CD4-positive, alpha-beta T cell (primary cell): ENCODE measurements at regions of chr3 and their contacts with region 1.

Region 1: DNA sequence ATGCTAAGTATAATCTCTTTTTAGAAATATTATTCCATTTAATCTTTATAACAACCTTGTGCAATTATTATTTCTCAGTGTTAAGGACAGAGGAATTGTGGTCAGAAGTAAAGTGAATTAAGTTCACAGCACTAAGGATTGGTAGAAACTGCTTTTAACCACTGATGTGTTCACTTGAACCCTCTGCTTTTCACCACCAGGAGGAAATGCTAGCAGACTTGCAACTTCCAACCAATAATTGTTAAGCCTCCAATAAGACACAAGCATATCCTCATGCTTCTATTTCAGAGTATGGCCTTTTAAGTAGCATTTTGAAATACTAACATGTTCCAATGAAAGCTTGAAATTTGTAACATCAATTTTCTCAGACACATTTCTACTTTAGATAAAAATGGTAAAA is 527.4 kb downstream of the SI start:
- DNase-seq: no peak
- ATAC-seq: no peak
- H3K4me3 ChIP-seq: no peak overlapping the region
- H3K4me3 Mint-ChIP-seq: no peak overlapping the region
- H3K27ac ChIP-seq: no peak overlapping the region
- H3K27ac Mint-ChIP-seq: no peak overlapping the region
- H3K4me1 ChIP-seq: no peaks in the 10 kb centered on the region
- H3K4me1 Mint-ChIP-seq: no peaks in the 10 kb centered on the region
- H3K27me3 ChIP-seq: no peaks in the 10 kb centered on the region
- H3K27me3 Mint-ChIP-seq: no peaks in the 10 kb centered on the region
- CTCF ChIP-seq: no peak

Region 2: GRCh38 chr3:164507886-164508285 is 43.0 kb before region 1 on chr3:
- CTCF ChIA-PET with region 1: no interaction called
- POLR2A ChIA-PET with region 1: no interaction called
- intact Hi-C with region 1: no loop called
- DNase-seq: no peak
- ATAC-seq: no peak
- H3K4me3 ChIP-seq: no peak overlapping the region
- H3K4me3 Mint-ChIP-seq: no peak overlapping the region
- H3K27ac ChIP-seq: no peak overlapping the region
- H3K27ac Mint-ChIP-seq: no peak overlapping the region
- H3K4me1 ChIP-seq: no peaks in the 10 kb centered on the region
- H3K4me1 Mint-ChIP-seq: no peaks in the 10 kb centered on the region
- H3K27me3 ChIP-seq: no peaks in the 10 kb centered on the region
- H3K27me3 Mint-ChIP-seq: no peaks in the 10 kb centered on the region
- CTCF ChIP-seq: no peak

Region 3: GRCh38 chr3:164608554-164609276 is 57.9 kb after region 1 on chr3:
- CTCF ChIA-PET with region 1: no interaction called
- POLR2A ChIA-PET with region 1: no interaction called
- intact Hi-C with region 1: loop called in 1 of 2 experiments (anchors 2 kb)
- DNase-seq: no peak
- ATAC-seq: no peak
- H3K4me3 ChIP-seq: no peak overlapping the region
- H3K4me3 Mint-ChIP-seq: no peak overlapping the region
- H3K27ac ChIP-seq: no peak overlapping the region
- H3K27ac Mint-ChIP-seq: no peak overlapping the region
- H3K4me1 ChIP-seq: no peaks in the 10 kb centered on the region
- H3K4me1 Mint-ChIP-seq: no peaks in the 10 kb centered on the region
- H3K27me3 ChIP-seq: no peaks in the 10 kb centered on the region
- H3K27me3 Mint-ChIP-seq: no peaks in the 10 kb centered on the region
- CTCF ChIP-seq: no peak

Region 4: DNA sequence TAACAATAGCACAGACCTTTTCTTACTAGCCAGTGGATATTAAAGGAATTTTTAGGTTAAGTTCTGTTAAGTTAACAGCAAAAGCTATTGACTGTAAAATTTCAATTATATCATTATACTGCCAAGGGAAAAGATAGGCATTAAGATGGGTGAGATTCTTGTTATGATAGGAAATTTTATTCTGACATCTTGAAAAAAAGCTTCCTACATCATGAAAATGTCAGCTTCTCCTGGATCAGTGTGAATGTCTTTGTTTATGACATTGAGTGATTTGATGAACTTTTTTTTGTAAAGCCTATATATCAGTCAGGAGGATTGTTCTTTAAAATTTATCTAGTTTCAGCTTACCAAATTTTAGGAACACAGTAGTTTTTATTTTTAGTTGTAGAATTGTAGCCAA is 692.7 kb after region 1 on chr3:
- CTCF ChIA-PET with region 1: no interaction called
- POLR2A ChIA-PET with region 1: no interaction called
- intact Hi-C with region 1: no loop called
- DNase-seq: no peak
- ATAC-seq: no peak
- H3K4me3 ChIP-seq: no peak overlapping the region
- H3K4me3 Mint-ChIP-seq: no peak overlapping the region
- H3K27ac ChIP-seq: no peak overlapping the region
- H3K27ac Mint-ChIP-seq: no peak overlapping the region
- H3K4me1 ChIP-seq: no peaks in the 10 kb centered on the region
- H3K4me1 Mint-ChIP-seq: no peaks in the 10 kb centered on the region
- H3K27me3 ChIP-seq: no peaks in the 10 kb centered on the region
- H3K27me3 Mint-ChIP-seq: no peaks in the 10 kb centered on the region
- CTCF ChIP-seq: no peak